ENCODE measurements at regions of chr15 and their contacts with region 1.

Region 1: GRCh38 chr15:70057931-70058641 is 39.6 kb downstream of the TLE3 start:
- DNase-seq: no peak
- CTCF ChIP-seq: no peak

Region 2: DNA sequence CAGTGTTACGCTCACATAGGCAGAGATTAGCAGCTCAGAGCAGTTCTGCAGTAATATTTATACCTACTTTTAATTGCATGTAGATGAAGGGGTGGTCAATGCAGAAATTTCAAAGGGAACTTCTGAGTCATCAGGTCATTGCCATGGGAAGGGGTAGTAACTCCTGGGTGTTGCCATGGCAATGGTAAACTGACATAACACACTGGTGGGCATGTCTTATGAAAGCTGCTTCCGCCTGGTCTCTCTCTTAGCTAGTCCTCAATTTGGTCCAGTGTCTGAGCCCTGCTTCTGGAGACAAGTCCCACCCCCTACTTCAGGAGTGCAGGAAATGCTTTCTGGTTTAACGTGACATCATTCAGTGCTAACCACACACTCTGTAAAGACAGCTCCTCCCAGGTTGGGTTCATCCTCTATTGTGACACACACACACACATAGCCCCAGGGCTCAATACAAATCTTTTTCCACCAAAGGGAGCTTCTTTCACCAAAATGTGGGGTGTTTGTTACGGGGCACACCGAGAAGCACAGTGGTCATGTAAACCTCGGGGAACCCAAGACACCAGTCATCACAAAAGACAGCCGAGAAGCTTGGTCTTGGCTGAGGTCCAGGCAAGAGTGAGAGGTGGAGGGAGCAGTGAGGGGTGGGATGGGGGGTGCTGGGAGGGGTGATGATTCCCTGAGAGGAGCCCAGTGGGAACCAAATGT is 34.9 kb before region 1 on chr15:
- CTCF ChIA-PET with region 1: no interaction called
- POLR2A ChIA-PET with region 1: no interaction called
- DNase-seq: peak; percentile 72
- CTCF ChIP-seq: no peak

Region 3: DNA sequence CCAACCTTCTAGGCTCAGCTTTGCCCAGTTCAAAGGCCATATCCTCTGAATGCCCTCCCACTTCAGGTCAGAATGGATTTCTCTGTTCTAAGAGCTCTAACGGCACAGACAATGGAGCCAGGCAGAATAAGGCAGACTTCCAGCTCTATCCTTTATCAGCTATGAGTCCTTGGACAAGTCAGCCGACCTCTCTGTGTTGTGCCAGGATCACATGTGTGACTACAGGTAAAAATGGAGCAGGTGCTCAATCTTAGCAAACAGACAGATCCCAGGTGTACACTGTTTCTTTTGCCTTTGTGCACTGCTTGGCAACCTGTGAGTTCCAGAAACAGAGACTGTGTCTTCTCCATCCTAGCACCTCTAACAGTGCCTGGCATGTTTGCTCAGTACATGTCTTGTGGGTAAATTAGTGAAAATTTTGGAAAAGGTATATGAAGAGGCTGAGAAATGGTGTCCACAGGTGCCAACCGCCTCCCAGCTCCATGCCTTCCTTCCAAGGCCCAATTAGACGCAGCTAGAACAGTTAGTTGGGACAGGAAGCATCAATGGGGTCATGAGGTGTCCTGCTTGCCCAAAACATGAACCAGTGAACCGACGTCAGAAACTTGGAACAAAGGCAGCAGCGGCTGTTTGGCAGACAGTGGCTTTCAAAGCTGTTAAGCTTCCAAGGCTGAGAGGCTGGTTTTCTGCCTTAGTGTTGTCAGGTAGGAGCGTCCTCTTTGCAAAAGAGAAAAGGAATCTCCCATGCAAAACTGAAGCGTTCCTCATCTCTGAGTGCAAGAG is 10.9 kb after region 1 on chr15:
- CTCF ChIA-PET with region 1: interaction called, 11 read pairs
- POLR2A ChIA-PET with region 1: no interaction called
- DNase-seq: no peak
- CTCF ChIP-seq: no peak